ENCODE measurements at regions of chr11 and their contacts with region 1.

Region 1: DNA sequence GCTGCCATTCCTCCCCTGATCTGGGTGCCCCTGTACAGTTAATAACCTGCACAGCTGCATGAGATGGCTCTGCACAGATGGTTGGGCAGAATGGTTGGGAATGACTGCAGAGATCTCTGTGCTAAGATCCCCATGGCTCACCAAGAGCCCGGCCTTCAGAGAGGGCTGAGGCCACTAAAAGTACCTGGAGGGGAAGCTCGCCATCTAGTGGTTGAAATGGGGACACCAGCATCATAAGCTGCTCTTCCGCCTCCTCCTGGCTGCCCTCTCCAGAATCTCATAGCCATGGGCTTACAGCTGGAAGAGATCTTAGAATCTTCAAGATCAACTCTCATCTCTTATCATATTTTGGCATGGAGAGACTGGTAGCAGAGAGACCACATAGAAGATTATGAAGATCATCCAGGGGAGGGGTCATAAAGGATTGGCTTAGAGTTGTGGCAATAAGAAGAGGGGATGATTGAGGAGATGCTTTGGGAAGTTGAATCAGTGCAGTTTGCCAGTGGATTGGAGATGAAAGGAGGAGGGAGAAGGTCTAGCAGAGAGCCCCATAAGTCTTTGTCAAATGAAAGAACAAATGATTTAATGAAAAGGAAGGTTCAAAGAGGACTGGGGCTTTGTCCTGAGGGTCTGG is 22.0 kb upstream of the TLCD5 start:
- DNase-seq: no peak
- H3K4me3 ChIP-seq: no peak overlapping the region
- CTCF ChIP-seq: peak; percentile 99

Region 2: GRCh38 chr11:120172054-120172911 is 130.8 kb before region 1 on chr11:
- CTCF ChIA-PET with region 1: interaction called, 413 read pairs
- POLR2A ChIA-PET with region 1: no interaction called
- DNase-seq: no peak
- H3K4me3 ChIP-seq: no peak overlapping the region
- CTCF ChIP-seq: peak; percentile 82

Region 3: DNA sequence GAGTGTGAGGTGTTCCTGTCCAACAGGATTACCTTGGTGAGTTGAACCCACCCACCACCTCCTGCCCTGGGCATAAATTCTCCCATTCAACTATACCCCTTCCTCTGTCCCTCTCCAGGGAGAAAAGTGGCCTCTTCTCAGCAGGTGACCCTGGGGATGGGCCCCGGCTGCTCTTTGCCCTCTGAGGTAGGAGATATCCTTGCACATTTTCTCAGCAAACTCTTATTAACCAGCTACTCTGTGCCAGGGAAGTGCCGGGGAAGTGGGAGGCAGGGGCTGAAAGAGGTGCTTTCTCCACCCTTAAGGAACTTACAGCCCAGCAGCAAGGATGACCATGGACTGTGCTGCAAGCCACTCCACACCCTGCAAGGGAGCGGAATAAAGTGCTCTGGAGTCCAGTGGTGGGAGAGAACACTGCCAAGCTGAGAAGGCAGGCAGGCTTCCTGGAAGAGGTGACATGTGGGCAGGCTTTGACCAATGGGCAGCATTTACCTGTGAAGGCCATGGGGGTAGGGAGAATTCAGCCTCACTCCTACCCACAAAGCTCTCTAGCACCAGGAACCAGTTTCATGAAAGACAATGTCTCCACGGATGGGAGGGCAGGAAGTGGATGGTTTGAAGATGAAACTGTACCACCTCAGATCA is 114.2 kb before region 1 on chr11:
- CTCF ChIA-PET with region 1: interaction called, 12 read pairs
- POLR2A ChIA-PET with region 1: no interaction called
- DNase-seq: no peak
- H3K4me3 ChIP-seq: no peak overlapping the region
- CTCF ChIP-seq: no peak

Region 4: GRCh38 chr11:120210626-120211521 is 92.2 kb before region 1 on chr11 and contains the start of gene OAF:
- CTCF ChIA-PET with region 1: interaction called, 1,135 read pairs
- POLR2A ChIA-PET with region 1: no interaction called
- DNase-seq: no peak
- H3K4me3 ChIP-seq: peak within 1 kb of the TSS; percentile 74
- CTCF ChIP-seq: peak; percentile 21

Region 5: DNA sequence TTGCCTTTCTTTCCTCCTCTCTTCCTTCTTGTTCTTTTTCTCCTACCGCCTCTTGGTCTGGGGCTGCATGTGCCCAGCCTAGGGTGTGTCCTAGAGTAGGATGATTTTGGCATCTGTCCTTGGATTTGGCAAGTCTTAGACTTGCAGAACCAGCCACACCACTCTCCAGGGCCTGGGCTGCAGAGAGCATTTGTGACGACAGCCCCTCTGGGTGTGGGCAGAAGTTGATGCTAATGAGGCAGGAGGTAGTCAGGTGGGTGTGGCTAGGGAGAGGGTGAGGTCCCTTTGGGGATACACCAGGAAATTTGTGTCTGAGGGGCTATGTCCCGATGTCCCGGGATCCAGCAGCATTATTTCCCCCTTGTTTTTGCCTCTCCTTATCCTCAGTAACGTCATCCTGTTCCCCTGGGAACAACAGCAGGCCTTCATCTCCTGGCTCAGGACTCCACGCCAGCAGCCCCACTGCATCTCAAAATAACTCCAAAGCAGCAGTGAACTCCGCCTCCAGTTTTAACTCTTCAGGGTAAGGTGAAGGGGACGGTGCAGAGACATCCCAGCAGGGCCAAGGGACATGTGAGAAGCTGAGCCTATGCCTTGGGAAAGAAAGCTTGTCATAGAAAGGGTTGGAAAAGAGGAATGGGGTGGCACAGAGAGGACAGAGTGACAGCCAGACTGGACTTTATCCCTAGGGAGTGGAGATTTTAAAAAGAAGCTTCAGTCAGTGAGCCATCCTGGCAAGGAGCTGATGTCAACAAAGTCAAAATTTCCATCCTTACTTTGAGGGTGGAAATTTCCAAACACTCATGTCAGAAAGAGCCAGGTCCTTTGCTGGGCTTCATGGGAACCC is 13.9 kb after region 1 on chr11:
- CTCF ChIA-PET with region 1: interaction called, 137 read pairs
- POLR2A ChIA-PET with region 1: interaction called, 4 read pairs
- DNase-seq: no peak
- H3K4me3 ChIP-seq: no peak overlapping the region
- CTCF ChIP-seq: no peak

Region 6: GRCh38 chr11:120335908-120336640 is 33.0 kb after region 1 on chr11 and contains the start of gene ARHGEF12:
- CTCF ChIA-PET with region 1: interaction called, 10 read pairs
- POLR2A ChIA-PET with region 1: no interaction called
- DNase-seq: peak; percentile 90
- H3K4me3 ChIP-seq: peak within 1 kb of the TSS; percentile 61
- CTCF ChIP-seq: peak; percentile 43

Region 7: GRCh38 chr11:120385110-120385509 is 82.0 kb after region 1 on chr11:
- CTCF ChIA-PET with region 1: no interaction called
- POLR2A ChIA-PET with region 1: no interaction called
- DNase-seq: no peak
- H3K4me3 ChIP-seq: no peak overlapping the region
- CTCF ChIP-seq: no peak